ENCODE measurements at regions of chr3 and their contacts with region 1.

Region 1: DNA sequence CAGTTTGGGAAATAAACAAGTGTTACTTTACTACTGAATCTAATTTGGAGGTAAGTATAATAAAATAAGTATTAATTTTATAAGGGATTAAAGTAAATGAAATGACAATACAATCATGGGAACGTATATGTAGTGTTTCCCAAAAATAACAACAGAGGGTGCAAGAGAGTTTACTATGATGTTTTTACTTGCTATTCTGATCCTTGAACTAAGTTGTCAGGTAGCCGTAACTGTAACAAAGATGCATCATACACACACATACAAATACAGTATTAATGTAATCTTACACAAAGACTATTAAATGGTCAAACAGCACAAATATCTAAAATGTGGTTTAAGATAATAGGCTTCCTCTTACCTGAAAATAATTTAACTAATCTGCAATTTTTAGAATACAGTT is 311.4 kb downstream of the TBC1D5 start:
- DNase-seq: no peak
- H3K4me3 ChIP-seq: peak overlapping the region in 5 of 59 donors; percentile 6 to 26 (median 15)
- H3K27ac ChIP-seq: peak overlapping the region in 2 of 59 donors; percentile 2 to 3
- H3K27me3 ChIP-seq: no peaks in the 10 kb centered on the region
- CTCF ChIP-seq: peak; percentile 14 to 86 (median 64)

Region 2: DNA sequence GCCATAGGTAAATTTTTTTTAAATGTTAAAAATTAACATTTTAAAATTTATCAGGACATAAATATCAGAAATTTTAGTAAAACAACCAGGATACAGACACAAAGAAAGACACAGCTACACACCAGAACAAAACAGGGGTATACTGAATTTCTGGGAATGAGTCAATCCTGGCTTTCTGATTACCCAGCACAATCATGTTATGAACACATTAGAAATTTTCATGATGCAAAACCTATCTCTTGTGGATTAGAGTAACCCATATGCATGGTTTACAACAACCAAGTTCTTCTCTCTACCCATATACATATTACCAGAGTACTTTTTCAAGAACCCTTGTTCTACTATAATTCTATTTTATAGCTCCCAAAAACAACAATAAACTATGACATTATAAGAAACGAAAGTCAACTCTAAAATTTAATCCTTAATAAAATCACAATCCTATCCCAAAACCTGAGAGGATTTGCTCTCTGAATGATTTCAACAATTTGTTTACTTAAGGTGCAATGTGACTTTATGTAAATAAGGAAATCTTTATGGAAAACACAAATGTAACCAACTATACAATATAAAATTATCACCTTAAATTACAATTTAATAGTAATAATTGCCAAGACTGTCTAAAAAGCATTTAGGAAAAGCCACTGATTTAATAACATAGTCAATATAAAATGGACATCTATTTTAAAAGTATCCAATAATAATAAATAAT is 126.9 kb after region 1 on chr3:
- intact Hi-C with region 1: no loop called
- DNase-seq: no peak
- H3K4me3 ChIP-seq: no peak overlapping the region
- H3K27ac ChIP-seq: no peak overlapping the region
- H3K27me3 ChIP-seq: no peaks in the 10 kb centered on the region
- CTCF ChIP-seq: no peak

Region 3: GRCh38 chr3:17686613-17687012 is 255.6 kb after region 1 on chr3:
- intact Hi-C with region 1: loop called in 1 of 2 experiments (anchors 5 kb)
- DNase-seq: no peak
- H3K4me3 ChIP-seq: no peak overlapping the region
- H3K27ac ChIP-seq: no peak overlapping the region
- H3K27me3 ChIP-seq: no peaks in the 10 kb centered on the region
- CTCF ChIP-seq: peak in 54 of 56 donors; percentile 19 to 81 (median 53)

Measured in dorsolateral prefrontal cortex (tissue), 120 donors.